Activated CD4-positive, alpha-beta T cell treated with anti-CD3 and anti-CD28 coated beads, Interleukin-2, amount 10 ng/mL, durations not matched to agents 7 days and 5 days (primary cell): ENCODE measurements at regions of chr7 and their contacts with region 1.

Region 1: DNA sequence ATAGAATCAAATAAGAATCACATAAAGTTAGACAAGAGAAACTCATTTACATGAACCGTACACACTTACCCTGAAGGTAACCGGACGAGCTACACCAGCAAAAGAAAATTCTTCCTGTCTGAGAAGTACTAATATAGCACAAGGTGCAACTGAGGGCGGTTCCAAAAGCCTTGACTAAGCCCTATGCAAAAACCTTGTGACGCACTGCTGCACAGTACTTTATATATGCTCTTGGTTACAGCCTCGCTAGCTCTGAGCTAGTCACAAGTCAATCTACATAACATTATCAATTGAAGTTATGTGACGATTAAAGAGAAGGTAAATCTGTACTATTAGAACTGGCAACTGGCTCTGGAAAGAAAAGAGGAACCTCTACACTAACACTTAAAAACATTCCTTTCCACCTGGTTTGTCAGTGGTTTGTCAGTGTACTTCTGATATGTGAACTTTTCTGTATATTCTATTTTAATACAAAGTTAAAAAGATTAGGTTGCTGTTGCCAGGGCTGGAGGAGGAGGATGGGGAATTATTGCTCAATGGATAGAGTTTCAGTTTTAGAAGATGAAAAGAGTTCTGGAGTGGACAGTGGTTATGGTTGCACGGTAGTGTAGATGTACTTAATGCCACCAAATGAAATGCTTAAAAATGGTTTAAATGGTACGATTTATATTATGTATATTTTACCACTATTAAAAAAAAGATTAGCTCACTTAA is 21.6 kb downstream of the NT5C3A start:
- DNase-seq: peak; percentile 85
- H3K4me3 Mint-ChIP-seq: peak overlapping the region; percentile 85
- H3K27ac Mint-ChIP-seq: peak overlapping the region; percentile 88
- H3K4me1 Mint-ChIP-seq: peaks cover 52% of the 10 kb centered on the region
- H3K27me3 Mint-ChIP-seq: no peaks in the 10 kb centered on the region

Region 2: DNA sequence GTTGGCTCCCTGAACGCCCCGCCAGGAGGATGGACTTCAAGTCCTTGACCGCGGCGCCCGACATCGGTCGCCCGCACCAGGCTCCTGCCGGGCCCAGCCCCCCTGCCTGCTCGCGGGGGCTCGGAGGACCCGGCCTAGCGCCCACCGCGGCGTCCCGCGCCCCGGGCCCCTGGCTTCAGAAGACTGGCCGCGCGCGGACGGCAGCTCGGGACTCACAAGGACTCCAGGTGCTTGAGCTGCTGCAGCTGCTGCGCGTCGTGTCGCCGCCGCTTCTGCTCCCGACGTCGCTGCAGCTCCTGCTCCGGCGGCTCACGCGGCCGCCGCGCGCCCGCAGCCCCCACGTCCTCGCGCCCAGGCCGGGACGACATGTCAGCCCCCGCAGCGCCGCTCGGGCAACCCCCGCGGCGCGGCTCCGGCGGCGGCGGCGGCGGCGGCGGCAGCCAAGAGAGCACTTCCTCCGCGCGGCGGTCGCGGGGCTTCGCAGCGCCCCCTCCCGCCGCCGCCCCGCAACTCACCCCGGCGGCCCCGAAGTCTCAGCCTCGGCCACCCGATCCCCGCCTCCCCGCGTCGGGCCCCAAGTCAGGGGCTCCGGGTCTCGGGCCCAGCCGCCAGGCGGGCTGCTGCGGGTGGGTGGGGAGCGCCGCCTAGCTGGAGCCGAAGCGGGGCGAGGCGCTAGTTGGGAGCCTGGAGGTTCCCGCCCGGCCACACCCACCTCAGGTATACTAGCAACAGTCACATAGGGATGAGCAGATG is 68.2 kb after region 1 on chr7 and contains the start of gene RP9:
- CTCF ChIA-PET with region 1: interaction called, 11 read pairs
- POLR2A ChIA-PET with region 1: no interaction called
- DNase-seq: peak; percentile 74
- H3K4me3 Mint-ChIP-seq: peak within 1 kb of the TSS; percentile 82
- H3K27ac Mint-ChIP-seq: peak within 1 kb of the TSS; percentile 10
- H3K4me1 Mint-ChIP-seq: peaks cover 40% of the 10 kb centered on the region
- H3K27me3 Mint-ChIP-seq: peaks cover 30% of the 10 kb centered on the region
- total RNA-seq, gene RP9: 10.8 to 13.2 TPM